PC-9 (cell line): ENCODE measurements at regions of chr6 and their contacts with region 1.

Region 1: DNA sequence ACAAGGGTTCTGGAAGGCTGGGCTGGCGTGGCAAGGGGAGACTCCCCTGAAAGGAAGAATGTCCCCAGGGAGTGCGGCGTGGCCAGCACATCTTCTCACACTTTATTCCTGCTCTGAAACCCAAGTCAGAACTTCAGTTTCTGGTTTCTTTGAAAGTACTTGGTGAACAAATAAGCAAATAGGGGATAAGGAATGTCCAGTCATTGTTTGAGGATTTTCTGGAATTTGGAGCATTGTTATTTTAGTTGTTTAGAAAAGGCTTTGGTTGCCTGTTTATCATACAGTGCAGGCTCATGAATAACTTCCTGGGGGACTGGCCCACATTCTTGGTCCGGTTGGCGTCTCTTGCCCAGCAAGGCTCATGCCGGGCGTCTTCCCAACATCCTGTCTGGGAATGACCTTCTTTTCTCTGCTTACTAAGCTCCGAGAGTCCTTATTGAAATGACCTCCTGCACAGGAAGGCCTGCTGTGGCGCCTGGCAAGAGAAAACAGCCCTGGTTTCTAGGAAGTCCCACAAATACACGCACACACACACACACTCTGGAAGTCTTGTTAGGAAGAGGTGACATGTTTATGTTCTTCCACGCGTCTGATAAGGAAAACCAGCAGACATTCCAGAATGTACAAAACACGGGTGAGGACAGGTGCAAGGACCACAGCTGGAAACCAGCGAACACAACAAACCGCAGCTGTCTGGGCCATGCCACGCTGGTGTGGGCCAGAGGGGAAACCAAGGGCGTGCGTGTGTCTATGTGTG is 71.9 kb downstream of the TMEM170B start:
- DNase-seq: peak; percentile 77 to 80
- H3K4me3 ChIP-seq: no peak overlapping the region
- H3K27ac ChIP-seq: no peak overlapping the region
- H3K4me1 ChIP-seq: peaks cover 24% of the 10 kb centered on the region
- H3K27me3 ChIP-seq: no peaks in the 10 kb centered on the region
- CTCF ChIP-seq: no peak

Region 2: GRCh38 chr6:11598684-11599083 is 10.8 kb before region 1 on chr6:
- CTCF ChIA-PET with region 1: no interaction called
- POLR2A ChIA-PET with region 1: no interaction called
- intact Hi-C with region 1: loop called (anchors 1 kb)
- DNase-seq: peak; percentile 66 to 98
- H3K4me3 ChIP-seq: no peak overlapping the region
- H3K27ac ChIP-seq: peak overlapping the region; percentile 26
- H3K4me1 ChIP-seq: peaks cover 39% of the 10 kb centered on the region
- H3K27me3 ChIP-seq: no peaks in the 10 kb centered on the region
- CTCF ChIP-seq: no peak

Region 3: DNA sequence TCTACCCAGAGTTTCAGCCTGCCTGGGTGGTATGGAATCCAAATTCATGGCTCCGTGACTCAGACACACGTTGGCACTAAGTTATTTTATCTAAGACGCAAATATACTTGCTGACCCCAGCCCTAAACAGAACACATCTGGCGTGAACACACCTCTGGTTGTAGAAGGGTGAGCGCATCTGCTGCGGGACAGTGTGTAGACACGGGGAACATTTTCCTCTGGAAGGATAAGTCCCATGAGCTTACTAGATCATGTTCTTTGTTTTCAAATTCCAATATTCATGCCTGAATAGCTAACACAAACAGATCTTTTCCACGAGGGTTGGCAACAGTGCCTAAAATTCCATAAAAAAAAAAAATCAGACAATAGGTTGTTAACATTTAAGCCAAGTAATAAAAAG is 15.8 kb after region 1 on chr6:
- CTCF ChIA-PET with region 1: no interaction called
- POLR2A ChIA-PET with region 1: no interaction called
- intact Hi-C with region 1: no loop called
- DNase-seq: no peak
- H3K4me3 ChIP-seq: no peak overlapping the region
- H3K27ac ChIP-seq: no peak overlapping the region
- H3K4me1 ChIP-seq: no peaks in the 10 kb centered on the region
- H3K27me3 ChIP-seq: no peaks in the 10 kb centered on the region
- CTCF ChIP-seq: no peak